ENCODE measurements at regions of chr1 and their contacts with region 1.

Region 1: DNA sequence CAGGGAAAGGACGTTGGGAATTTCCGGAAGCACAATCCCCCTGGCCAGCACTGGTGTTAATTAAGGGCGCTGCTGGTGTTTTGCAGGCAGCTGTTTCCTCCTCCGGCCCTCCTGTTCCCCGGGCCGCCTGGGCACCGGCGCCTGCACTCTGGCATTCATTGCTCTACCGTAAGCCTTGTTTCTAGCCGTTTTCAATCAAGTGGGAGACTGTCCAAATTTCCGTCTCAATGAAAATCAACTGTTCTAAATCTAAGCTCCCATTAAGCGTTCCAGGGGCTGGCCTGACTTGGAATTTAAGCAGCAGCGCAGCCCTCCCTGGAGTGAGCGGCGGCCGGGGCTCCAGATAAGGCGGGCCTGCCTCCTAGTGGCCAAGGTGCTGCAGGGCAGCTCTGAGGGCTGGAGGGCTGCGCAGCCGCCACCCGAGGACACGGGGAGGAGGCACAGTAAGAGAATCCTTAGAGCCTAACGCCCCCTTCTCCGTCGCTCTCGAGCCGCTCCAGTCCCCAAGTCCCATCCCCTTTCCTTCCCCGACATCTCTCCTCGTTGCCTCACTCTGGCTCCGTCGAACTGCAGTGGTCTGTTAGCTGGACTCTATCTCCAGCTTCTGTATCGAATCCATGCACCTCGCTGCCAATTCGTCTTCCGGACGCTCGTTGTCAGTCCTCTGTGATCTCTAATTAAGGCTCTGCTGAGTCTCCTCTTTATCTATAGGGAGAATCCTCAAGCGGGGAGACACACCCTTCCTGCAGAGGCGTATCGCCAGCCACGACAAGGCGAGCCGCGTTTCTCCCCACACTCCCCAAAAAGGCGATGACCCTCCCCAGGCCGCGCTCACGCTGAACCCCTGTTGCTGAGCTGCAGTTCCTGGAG is 57.8 kb upstream of the LRRC8D start:
- DNase-seq: peak; percentile 88 to 90
- ATAC-seq: peak; percentile 94 to 99 (median 98)
- H3K4me3 ChIP-seq: peak overlapping the region; percentile 11 to 60 (median 54)
- H3K27ac ChIP-seq: peak overlapping the region; percentile 6 to 82 (median 72)
- H3K4me1 ChIP-seq: peaks cover 8 to 60% (median 51%) of the 10 kb centered on the region in 9 donors
- H3K27me3 ChIP-seq: no peaks in the 10 kb centered on the region
- CTCF ChIP-seq: peak; percentile 91 to 100 (median 99)

Region 2: DNA sequence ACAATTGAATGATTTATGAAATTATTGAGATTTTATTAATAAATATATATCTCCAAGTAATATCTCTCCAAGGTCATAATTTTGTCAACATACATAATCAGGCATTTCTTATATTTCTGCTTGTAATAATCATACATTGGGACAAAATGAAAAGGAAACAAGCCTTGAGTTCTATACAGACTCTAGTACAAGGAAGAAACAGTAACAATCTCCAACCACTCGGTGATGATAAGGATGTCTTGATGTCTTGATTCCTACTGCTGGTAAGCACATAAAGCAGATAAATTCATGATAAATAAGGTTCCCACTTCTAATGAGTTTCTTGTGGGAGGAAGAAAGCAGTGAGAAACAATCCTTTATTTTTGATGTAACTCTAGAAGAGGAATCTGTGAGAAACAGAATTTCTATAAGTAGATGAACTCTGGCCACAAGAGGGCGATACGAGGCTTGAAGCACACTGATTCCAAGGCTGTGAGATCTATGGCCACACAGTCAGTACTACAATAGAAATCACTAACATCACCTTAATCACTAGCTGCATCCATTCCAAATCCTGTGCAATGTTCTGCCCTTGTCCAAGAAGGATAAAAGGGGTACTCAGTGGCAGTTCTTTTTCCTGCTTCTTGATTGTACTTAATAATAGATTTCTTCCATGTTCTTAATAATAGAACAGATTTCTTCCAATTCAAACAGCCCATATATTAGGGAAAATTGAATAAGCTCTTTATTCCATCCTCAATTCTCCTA is 279.8 kb before region 1 on chr1:
- intact Hi-C with region 1: loop called (anchors 1 to 5 kb)
- DNase-seq: peak; percentile 36 to 88
- ATAC-seq: peak in 7 of 8 donors; percentile 71 to 88 (median 81)
- H3K4me3 ChIP-seq: no peak overlapping the region
- H3K27ac ChIP-seq: no peak overlapping the region
- H3K4me1 ChIP-seq: peaks cover 0 to 9% (median 0%) of the 10 kb centered on the region in 9 donors
- H3K27me3 ChIP-seq: no peaks in the 10 kb centered on the region
- CTCF ChIP-seq: peak; percentile 60 to 91 (median 83)

Region 3: GRCh38 chr1:89524369-89525168 is 238.4 kb before region 1 on chr1 and contains the start of gene LRRC8B:
- intact Hi-C with region 1: loop called in 4 of 10 experiments (anchors 2 to 10 kb)
- DNase-seq: peak; percentile 93 to 94
- ATAC-seq: peak; percentile 99 to 100 (median 99)
- H3K4me3 ChIP-seq: peak within 1 kb of the TSS; percentile 71 to 99 (median 96)
- H3K27ac ChIP-seq: peak within 1 kb of the TSS in 9 of 10 donors; percentile 87 to 96 (median 90)
- H3K4me1 ChIP-seq: peaks cover 0 to 49% (median 17%) of the 10 kb centered on the region in 9 donors
- H3K27me3 ChIP-seq: no peaks in the 10 kb centered on the region
- CTCF ChIP-seq: no peak
- total RNA-seq, gene LRRC8B: 2.4 to 6.6 (median 4.5) TPM

Region 4: DNA sequence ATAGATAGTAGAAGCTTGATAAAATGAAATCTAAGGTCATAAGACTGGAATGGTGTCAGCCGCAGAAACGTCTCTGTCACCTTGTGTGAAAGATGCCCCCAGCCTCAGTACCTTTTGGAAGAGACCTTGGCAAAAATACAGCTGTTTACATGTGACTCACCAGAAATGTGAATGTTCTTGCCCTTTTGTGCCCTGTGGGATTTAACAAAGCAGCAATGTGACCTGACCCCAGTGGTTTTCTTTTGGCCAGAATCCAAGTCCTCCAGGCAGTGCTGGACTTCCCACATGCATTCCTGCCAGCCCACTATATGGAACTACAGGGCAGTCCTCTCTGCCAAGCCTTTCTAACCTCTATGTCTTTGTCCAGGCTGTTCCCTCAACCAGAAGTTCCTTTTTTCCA is 157.3 kb before region 1 on chr1:
- intact Hi-C with region 1: loop called in 2 of 10 experiments (anchors 10 kb)
- DNase-seq: no peak
- ATAC-seq: no peak
- H3K4me3 ChIP-seq: no peak overlapping the region
- H3K27ac ChIP-seq: peak overlapping the region in 4 of 10 donors; percentile 25 to 81 (median 40)
- H3K4me1 ChIP-seq: peaks cover 11 to 82% (median 69%) of the 10 kb centered on the region in 9 donors
- H3K27me3 ChIP-seq: no peaks in the 10 kb centered on the region
- CTCF ChIP-seq: no peak

Region 5: GRCh38 chr1:89692601-89693521 is 70.2 kb before region 1 on chr1:
- intact Hi-C with region 1: loop called in 1 of 10 experiments (anchors 5 kb)
- DNase-seq: peak in 1 of 2 donors; percentile 61
- ATAC-seq: peak; percentile 73 to 91 (median 80)
- H3K4me3 ChIP-seq: no peak overlapping the region
- H3K27ac ChIP-seq: peak overlapping the region in 9 of 10 donors; percentile 14 to 77 (median 68)
- H3K4me1 ChIP-seq: peaks cover 2 to 77% (median 64%) of the 10 kb centered on the region in 9 donors
- H3K27me3 ChIP-seq: no peaks in the 10 kb centered on the region
- CTCF ChIP-seq: no peak

Measured in heart right ventricle (tissue), 16 donors.